Heart right ventricle (tissue), 16 donors: ENCODE measurements at regions of chr5 and their contacts with region 1.

Region 1: GRCh38 chr5:72510610-72511181 is 3.5 kb upstream of the ZNF366 start:
- DNase-seq: peak in 1 of 2 donors; percentile 23
- ATAC-seq: peak in 4 of 8 donors; percentile 27 to 75 (median 66)
- H3K4me3 ChIP-seq: no peak overlapping the region
- H3K27ac ChIP-seq: peak overlapping the region in 8 of 10 donors; percentile 15 to 92 (median 80)
- H3K4me1 ChIP-seq: peaks cover 10 to 61% (median 40%) of the 10 kb centered on the region in 9 donors
- H3K27me3 ChIP-seq: no peaks in the 10 kb centered on the region
- CTCF ChIP-seq: no peak

Region 2: GRCh38 chr5:72440207-72440638 is 70.5 kb before region 1 on chr5:
- intact Hi-C with region 1: no loop called
- DNase-seq: no peak
- ATAC-seq: peak in 5 of 8 donors; percentile 35 to 81 (median 61)
- H3K4me3 ChIP-seq: no peak overlapping the region
- H3K27ac ChIP-seq: peak overlapping the region in 5 of 10 donors; percentile 8 to 70 (median 45)
- H3K4me1 ChIP-seq: peaks cover 0 to 52% (median 20%) of the 10 kb centered on the region in 9 donors
- H3K27me3 ChIP-seq: no peaks in the 10 kb centered on the region
- CTCF ChIP-seq: no peak

Region 3: DNA sequence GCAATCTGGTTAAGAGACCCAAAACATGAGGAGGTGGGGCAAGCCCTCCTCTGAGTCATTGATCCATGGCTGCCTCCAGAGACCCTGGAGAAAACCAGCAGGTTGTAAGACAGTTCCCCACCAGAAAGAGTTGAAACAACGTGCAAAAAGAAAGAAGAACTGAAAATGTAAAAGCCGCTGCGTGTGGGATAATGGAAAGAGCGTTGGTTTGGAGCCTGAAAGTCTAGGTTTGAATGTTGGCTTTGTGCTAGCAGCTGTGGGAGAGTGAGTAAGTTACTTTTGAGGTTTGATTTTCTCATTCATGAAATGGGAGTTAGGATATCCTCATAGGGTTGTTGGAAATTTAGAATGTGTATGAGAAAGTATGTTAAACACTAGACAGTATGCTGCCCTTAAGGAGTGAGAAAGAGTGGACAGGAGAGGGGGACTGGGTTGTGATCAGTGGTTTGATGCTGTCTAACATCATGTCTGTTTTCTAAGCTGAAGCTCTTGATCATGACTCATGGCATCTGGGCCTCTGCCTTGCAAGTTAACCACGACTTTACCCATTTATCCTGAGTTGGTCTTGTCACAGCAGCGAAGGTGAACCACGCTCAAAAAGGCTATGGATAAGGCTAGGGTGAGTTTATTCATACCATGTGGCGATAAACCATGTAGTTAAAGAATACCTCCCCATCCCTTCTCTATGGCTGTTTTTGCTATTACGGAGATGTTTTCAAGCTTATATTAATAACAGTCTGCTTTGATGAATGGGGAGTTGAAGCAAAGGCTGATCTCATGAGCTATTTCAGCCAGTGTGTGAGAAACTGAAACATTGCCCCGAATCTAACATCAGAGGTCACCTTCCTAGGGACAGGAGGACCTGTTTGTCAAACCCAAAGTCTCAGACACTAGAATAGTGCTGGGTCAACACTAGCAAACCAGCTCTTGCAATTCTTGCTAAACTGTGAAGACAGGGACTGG is 44.8 kb before region 1 on chr5:
- intact Hi-C with region 1: loop called in 2 of 10 experiments (anchors 2 to 5 kb)
- DNase-seq: no peak
- ATAC-seq: peak in 1 of 8 donors; percentile 9
- H3K4me3 ChIP-seq: no peak overlapping the region
- H3K27ac ChIP-seq: peak overlapping the region in 8 of 10 donors; percentile 27 to 75 (median 49)
- H3K4me1 ChIP-seq: peaks cover 2 to 70% (median 52%) of the 10 kb centered on the region in 9 donors
- H3K27me3 ChIP-seq: no peaks in the 10 kb centered on the region
- CTCF ChIP-seq: no peak